Motor neuron (in vitro differentiated cells): ENCODE measurements at regions of chr13 and their contacts with region 1.

Region 1: GRCh38 chr13:98853771-98854221 is 101.3 kb upstream of the SLC15A1 start:
- ATAC-seq: peak in 3 of 8 experiments; percentile 64 to 82 (median 66)
- H3K4me3 ChIP-seq: no peak overlapping the region
- H3K27ac ChIP-seq: no peak overlapping the region
- H3K4me1 ChIP-seq: no peaks in the 10 kb centered on the region

Region 2: GRCh38 chr13:98267080-98267912 is 586.5 kb before region 1 on chr13:
- in situ Hi-C with region 1: no loop called
- ATAC-seq: peak in 1 of 8 experiments; percentile 41
- H3K4me3 ChIP-seq: no peak overlapping the region
- H3K27ac ChIP-seq: no peak overlapping the region
- H3K4me1 ChIP-seq: peaks cover 2 to 16% of the 10 kb centered on the region in 2 donors

Region 3: DNA sequence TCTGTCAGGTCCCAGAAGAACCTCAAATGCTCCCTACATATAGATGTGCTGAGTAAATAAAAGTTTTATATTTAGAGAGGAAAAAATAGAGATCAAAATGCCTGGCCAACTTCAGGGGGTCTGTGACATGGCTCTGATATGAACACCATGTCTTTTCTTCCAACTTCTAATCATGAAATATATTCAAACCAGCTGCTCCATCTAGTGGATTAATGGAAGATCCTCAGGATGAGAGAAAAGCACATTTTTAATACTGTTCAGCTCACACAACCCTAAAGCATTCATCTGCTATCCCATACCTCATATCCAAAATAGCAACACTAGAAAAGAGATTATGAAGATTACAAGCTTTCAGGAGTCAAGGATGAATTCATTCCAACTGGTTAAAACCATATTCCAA is 180.0 kb after region 1 on chr13:
- in situ Hi-C with region 1: loop called in 1 of 9 experiments (anchors 25 kb)
- ATAC-seq: peak in 5 of 8 experiments; percentile 31 to 74 (median 72)
- H3K4me3 ChIP-seq: no peak overlapping the region
- H3K27ac ChIP-seq: no peak overlapping the region
- H3K4me1 ChIP-seq: no peaks in the 10 kb centered on the region